Heart right ventricle (tissue), 16 donors: ENCODE measurements at regions of chr14 and their contacts with region 1.

Region 1: DNA sequence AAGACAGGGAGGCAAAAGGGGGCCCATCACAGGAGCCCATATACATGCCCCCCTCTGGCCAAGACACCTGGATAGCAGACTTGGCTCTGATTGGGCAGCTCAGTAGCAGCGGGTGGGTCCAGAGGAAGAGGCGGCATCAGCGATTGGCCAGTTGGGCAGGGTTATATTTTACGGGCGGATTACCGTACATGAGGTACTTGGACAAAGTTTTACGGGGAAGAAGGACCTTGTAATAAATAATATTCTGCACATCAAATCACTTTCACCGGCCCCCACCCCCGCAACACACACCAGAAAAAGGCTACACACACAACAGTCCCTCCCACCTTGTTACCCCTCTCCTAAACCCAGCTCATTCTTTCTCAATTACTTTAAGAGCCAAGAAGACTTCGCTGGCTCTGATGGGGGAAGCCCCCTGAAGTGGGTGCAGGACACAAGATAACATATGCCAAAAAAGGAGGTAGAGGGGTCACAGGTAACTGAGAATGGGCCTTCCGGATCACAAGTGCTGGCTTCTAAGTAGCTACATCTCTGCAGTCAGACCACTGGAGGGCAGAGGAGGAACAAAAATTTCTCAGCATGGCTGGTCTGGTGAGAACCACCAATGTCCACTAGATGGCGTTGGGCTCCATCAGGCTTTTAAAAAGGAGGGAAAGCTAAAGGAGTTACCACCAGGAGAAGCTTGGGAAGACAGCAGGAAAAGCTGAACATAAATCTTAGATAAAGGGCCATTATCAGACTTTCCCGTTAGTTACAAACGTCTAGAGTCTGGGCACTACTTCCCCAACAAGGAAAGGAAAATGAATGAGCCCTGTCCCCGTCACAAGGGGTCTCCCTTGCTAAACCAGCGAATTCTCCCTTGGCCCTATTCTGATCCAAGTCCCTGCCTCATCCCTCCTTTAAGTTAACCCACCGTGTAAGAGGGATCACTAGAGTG is 11.4 kb upstream of the CDH24 start:
- DNase-seq: peak in 1 of 2 donors; percentile 87
- ATAC-seq: peak; percentile 57 to 78 (median 68)
- H3K4me3 ChIP-seq: no peak overlapping the region
- H3K27ac ChIP-seq: peak overlapping the region in 4 of 10 donors; percentile 4 to 45 (median 16)
- H3K4me1 ChIP-seq: peaks cover 15 to 47% (median 41%) of the 10 kb centered on the region in 9 donors
- H3K27me3 ChIP-seq: no peaks in the 10 kb centered on the region
- CTCF ChIP-seq: peak; percentile 91 to 100 (median 98)

Region 2: DNA sequence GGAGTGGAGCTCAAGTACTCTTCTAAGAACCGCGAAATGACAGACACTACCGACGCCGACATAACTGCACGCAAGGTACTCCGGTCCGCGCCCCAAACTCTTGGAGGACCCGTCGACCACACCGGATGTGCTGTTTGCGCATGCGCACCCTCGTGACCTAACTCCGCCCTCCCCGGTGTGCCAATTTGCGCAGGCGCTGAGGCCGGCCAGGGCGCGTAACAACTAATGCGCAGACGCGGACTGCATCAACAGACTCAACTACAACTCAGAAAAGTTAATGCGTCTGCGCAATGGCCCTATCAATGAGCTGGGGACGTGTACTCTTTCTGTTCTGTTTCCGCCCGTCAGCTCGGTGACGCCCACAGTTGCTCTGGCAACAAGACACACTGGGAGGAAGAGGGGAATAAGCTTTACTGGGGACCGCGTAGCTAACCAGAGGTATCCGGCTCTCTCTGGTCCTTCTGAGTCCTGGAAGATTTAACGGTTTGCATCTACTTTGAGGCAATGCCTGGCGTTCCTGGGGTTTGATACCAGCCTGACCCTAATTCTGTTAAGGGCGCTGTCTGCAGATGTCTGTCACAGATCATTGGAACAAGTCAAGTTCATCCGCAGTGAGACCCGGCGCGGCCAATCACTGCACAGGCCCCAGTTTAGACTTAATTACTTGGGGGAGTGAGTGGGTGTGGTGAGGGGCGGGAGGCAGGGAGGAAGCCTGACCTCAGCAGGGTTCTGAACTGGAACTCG is 479.5 kb before region 1 on chr14 and contains the start of gene DAD1:
- intact Hi-C with region 1: loop called in 1 of 10 experiments (anchors 10 kb)
- DNase-seq: peak; percentile 99
- ATAC-seq: peak; percentile 98 to 99 (median 99)
- H3K4me3 ChIP-seq: peak within 1 kb of the TSS; percentile 48 to 94 (median 73)
- H3K27ac ChIP-seq: peak within 1 kb of the TSS; percentile 76 to 96 (median 90)
- H3K4me1 ChIP-seq: peaks cover 3 to 55% (median 47%) of the 10 kb centered on the region in 9 donors
- H3K27me3 ChIP-seq: no peaks in the 10 kb centered on the region
- CTCF ChIP-seq: no peak
- total RNA-seq, gene DAD1: 115 to 182 (median 136) TPM

Region 3: DNA sequence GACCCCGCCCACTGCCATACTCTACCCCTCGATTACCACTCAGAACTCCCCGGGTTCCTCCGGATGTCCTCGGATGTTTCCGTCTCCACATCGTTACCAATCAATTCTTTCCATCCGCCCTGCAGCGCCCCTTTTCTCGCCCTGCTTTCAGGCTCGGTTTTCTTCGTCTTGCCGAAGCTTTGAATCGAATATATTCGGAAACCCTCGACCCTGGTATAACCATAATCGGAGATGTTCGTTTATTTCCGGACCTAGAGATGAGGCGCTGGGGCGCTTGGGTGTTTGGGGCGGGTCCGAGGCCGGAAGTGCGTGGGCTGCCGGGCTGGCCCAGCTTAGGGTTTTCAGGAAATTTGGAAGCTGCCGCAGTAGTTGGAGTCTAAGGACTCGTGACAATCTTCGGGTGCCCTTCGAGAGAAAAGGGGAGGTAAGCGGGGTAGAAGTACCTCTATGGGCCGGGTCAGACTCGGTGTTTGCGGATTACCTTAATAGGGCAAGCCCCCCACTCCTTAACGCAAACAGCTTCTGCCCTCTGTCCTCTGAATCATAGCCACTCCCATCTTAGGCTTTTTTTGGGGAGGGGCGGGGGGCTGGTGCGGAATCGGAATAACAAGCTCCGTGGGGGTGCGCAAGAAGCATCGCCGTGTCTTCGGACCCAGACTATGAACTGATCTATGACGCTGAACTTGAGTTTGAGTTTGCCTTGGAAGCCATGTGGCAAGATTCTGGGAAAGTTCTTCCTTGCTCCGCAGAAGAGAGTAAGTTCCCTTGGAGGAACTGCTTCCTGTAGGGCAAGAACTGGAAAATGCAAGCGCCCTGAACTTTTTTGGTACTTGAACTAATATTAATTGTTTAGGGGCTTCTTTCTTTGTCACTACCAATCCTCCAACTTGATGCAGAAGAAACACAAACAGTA is 26.7 kb after region 1 on chr14 and contains the start of gene C14orf119:
- intact Hi-C with region 1: loop called in 2 of 10 experiments (anchors 1 to 2 kb)
- DNase-seq: peak; percentile 34 to 100
- ATAC-seq: peak; percentile 94 to 97 (median 96)
- H3K4me3 ChIP-seq: peak within 1 kb of the TSS; percentile 66 to 97 (median 76)
- H3K27ac ChIP-seq: peak within 1 kb of the TSS; percentile 92 to 99 (median 96)
- H3K4me1 ChIP-seq: peaks cover 8 to 62% (median 49%) of the 10 kb centered on the region in 9 donors
- H3K27me3 ChIP-seq: no peaks in the 10 kb centered on the region
- CTCF ChIP-seq: no peak
- total RNA-seq, gene C14orf119: 22.3 to 35.9 (median 28.4) TPM

Region 4: GRCh38 chr14:23104591-23105347 is 36.0 kb after region 1 on chr14 and contains the start of gene CIROP:
- intact Hi-C with region 1: loop called in 2 of 10 experiments (anchors 2 to 5 kb)
- DNase-seq: no peak
- ATAC-seq: no peak
- H3K4me3 ChIP-seq: no peak within 1 kb of the TSS
- H3K27ac ChIP-seq: no peak within 1 kb of the TSS
- H3K4me1 ChIP-seq: peaks cover 0 to 15% (median under 1%) of the 10 kb centered on the region in 9 donors
- H3K27me3 ChIP-seq: peaks cover 0 to 2% (median 0%) of the 10 kb centered on the region in 7 donors
- CTCF ChIP-seq: no peak
- total RNA-seq, gene CIROP: not detected

Region 5: GRCh38 chr14:23110579-23111365 is 42.0 kb after region 1 on chr14:
- intact Hi-C with region 1: loop called in 3 of 10 experiments (anchors 2 to 5 kb)
- DNase-seq: no peak
- ATAC-seq: no peak
- H3K4me3 ChIP-seq: no peak overlapping the region
- H3K27ac ChIP-seq: no peak overlapping the region
- H3K4me1 ChIP-seq: peaks cover 0 to 36% (median 1%) of the 10 kb centered on the region in 9 donors
- H3K27me3 ChIP-seq: peaks cover 0 to 24% (median 7%) of the 10 kb centered on the region in 7 donors
- CTCF ChIP-seq: no peak

Region 6: DNA sequence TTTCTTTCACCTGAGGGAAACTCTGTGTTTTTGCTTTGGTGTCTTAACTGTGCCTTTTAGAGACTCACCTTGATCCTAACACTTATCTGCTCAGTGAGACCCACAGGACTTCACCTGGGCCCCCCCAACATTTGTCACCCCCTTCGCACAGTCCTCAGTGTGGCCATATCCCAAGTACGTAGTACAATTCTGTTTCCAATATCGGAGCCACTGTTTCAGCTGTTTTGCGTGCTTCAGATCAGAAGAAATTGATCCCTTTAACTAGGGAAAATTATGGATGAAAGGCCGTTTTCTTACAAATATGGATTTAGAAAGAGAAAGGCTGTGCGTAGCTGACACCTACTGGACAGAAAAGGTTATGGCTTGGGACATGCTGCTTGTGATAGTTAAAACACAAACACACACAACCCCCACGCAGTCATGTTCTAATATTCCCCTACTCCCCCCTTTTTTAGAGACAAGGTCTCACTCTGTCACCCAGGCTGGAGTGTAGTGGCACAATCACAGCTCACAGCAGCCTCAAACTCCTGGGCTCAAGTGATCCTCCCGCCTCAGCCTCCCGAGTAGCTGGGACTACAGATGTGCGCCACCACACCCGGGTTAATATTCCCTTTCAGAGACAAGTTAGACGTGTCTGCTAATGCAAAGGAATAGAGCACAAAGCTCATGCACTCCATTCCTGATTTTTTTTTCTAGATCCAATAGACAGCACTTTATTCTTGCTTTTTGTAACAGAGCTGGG is 118.3 kb after region 1 on chr14:
- intact Hi-C with region 1: loop called in 1 of 10 experiments (anchors 5 kb)
- DNase-seq: peak in 1 of 2 donors; percentile 38
- ATAC-seq: peak in 7 of 8 donors; percentile 51 to 70 (median 62)
- H3K4me3 ChIP-seq: no peak overlapping the region
- H3K27ac ChIP-seq: no peak overlapping the region
- H3K4me1 ChIP-seq: peaks cover 0 to 21% (median 2%) of the 10 kb centered on the region in 9 donors
- H3K27me3 ChIP-seq: peaks cover 0 to 10% (median 3%) of the 10 kb centered on the region in 7 donors
- CTCF ChIP-seq: peak; percentile 55 to 88 (median 73)